ENCODE measurements at regions of chr3 and their contacts with region 1.

Region 1: GRCh38 chr3:69161587-69162307 is 39.4 kb upstream of the LMOD3 start:
- DNase-seq: peak in 1 of 2 donors; percentile 30
- ATAC-seq: peak; percentile 83

Region 2: DNA sequence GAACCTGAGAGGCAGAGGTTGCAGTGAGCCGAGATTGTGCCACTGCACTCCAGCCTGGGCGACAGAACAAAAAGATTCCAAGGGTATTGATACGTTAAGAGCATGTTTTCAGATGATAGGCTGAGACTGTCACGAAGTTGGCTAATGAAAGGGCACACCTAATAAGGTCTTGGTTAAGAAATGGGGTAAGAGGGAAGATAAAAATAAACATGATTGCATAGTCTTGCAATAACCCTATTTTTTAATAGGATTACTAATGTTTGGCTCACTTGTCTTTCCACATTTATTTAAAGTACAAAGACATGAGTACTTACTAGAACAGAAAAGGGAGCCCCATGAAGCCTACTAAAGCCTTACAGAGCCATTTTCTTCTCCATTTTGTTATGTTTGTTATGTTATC is 115.1 kb after region 1 on chr3:
- intact Hi-C with region 1: loop called in 1 of 2 experiments (anchors 5 kb)
- DNase-seq: no peak
- ATAC-seq: no peak

Region 3: DNA sequence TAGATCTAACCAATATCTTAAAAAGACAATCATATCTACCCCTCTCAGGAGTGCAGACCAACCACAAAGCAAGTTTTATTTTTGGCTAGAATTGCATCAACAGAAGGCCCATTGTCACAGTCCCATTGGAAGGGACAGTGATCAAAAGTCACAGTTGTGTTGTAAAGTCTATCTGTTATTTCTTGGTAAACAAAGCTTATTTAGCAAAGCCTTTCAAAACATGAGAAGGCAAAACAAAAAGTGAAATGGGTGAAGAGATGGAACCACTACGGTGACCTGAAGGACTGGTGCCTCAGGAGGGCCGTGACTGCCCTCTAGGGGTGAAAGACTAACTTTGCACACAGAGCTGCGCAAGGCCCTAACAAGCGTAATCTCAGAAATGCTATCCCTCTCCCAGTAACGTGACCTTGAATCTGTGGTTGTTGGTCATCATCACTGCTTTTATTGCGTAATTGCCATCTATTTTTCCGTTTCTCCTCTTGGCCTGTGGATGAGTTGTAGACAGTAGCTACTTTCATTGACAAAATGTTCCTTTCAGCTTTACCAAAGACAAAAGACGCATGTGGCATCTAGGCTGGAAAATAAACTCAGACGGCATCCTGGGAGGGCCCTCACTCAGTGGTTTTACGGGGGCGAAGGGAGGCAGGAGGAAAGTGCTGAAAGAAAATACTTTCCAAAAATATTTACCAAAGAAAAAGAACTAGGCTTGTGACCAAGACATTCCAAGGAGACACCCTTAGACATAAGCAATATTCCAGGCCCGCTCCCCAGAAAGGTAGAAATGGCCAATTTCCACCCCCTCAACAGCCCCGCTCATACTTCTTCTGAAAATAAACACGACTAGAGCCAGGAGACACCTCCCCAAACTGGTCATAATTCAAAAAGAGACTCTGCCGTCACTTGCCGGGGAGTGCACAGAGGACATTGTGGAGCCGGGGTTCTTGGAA is 144.8 kb after region 1 on chr3:
- intact Hi-C with region 1: loop called in 1 of 2 experiments (anchors 2 kb)
- DNase-seq: peak; percentile 47 to 52
- ATAC-seq: peak; percentile 96

Region 4: GRCh38 chr3:69425261-69425660 is 263.5 kb after region 1 on chr3:
- intact Hi-C with region 1: loop called in 1 of 2 experiments (anchors 10 kb)
- DNase-seq: no peak
- ATAC-seq: peak; percentile 78

Region 5: GRCh38 chr3:69671082-69671952 is 509.6 kb after region 1 on chr3:
- intact Hi-C with region 1: loop called in 1 of 2 experiments (anchors 5 kb)
- DNase-seq: peak in 1 of 2 donors; percentile 16
- ATAC-seq: no peak